ENCODE measurements at regions of chr1 and their contacts with region 1.

Region 1: DNA sequence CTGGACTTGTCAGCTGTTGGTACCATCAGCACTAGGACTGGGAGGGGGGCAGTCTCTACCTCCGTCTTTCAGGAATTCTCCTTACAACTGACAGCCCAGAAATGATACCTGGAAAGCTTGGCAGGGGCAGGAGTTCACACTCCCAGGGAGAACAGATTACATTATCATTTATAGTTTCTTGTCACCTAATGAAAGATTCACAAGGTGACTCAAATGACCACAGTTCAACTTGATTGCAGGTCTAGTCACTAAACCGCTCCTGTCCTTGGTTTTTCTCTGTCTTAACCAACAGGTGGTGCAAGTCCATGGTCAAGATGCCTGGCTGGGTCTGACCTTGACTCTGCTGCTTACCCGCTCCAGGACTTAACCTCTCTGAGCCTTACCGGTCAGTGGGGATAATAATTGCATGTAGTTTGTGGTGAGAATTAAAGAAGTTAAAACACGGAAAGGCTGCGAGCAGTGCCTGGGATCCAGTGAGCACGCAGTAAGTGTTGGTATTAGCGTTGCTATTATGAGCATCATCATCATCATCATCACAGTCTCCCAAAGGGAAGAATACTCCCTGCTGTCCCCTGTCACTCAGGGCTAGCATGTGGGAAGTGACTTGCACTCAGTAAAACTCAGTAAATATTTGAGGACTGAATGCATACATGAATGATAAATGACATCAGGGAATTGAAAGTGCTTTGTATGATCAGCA is 125.3 kb upstream of the CD34 start:
- DNase-seq: peak in 1 of 2 experiments; percentile 34
- H3K4me3 ChIP-seq: no peak overlapping the region
- H3K4me3 Mint-ChIP-seq: no peak overlapping the region
- H3K27ac Mint-ChIP-seq: no peak overlapping the region
- H3K4me1 ChIP-seq: no peaks in the 10 kb centered on the region
- H3K4me1 Mint-ChIP-seq: no peaks in the 10 kb centered on the region
- H3K27me3 ChIP-seq: no peaks in the 10 kb centered on the region
- H3K27me3 Mint-ChIP-seq: peaks cover 5% of the 10 kb centered on the region
- CTCF ChIP-seq: peak in 1 of 2 experiments; percentile 49

Region 2: DNA sequence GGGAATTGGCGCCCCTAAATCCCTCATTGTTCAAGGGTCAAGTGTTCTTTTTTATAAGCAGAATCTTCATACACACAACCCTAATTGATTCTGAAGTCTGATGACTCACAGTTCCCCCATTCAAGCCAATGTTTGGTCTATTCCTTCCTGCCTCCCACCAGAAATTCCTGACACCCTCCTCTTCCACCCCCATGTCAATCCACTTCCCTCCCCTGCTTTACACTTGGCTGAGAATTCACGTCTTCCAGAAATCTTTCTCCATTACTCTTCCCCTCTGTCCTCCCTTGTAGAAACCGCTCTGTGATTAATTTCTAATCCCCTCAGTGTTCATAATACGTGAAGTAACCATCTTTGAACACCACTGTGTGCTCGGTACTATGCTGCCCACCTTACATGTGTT is 49.1 kb before region 1 on chr1:
- CTCF ChIA-PET with region 1: no interaction called
- POLR2A ChIA-PET with region 1: no interaction called
- intact Hi-C with region 1: no loop called
- DNase-seq: no peak
- H3K4me3 ChIP-seq: no peak overlapping the region
- H3K4me3 Mint-ChIP-seq: no peak overlapping the region
- H3K27ac Mint-ChIP-seq: no peak overlapping the region
- H3K4me1 ChIP-seq: no peaks in the 10 kb centered on the region
- H3K4me1 Mint-ChIP-seq: no peaks in the 10 kb centered on the region
- H3K27me3 ChIP-seq: no peaks in the 10 kb centered on the region
- H3K27me3 Mint-ChIP-seq: peaks cover 27% of the 10 kb centered on the region
- CTCF ChIP-seq: no peak

Region 3: DNA sequence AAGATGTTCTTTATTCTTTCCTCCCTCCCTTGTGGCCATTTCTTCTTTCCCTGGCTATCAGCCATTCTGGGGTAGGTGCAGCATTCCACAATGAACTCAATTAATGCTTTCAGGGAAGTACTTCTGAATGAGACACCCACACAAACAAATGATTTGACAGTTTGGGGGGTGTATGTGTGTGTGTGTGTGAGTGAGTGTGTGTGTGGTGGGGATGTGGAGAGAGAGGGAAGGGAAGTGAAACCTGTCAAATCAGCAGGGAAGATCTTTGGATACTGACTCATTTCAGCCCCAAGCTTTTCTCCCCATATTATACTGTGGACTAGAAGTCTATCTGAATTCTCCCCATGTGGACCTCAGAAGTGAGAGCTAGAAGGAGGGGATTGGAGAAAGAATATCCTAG is 29.6 kb after region 1 on chr1:
- CTCF ChIA-PET with region 1: no interaction called
- POLR2A ChIA-PET with region 1: no interaction called
- intact Hi-C with region 1: no loop called
- DNase-seq: no peak
- H3K4me3 ChIP-seq: no peak overlapping the region
- H3K4me3 Mint-ChIP-seq: no peak overlapping the region
- H3K27ac Mint-ChIP-seq: no peak overlapping the region
- H3K4me1 ChIP-seq: no peaks in the 10 kb centered on the region
- H3K4me1 Mint-ChIP-seq: no peaks in the 10 kb centered on the region
- H3K27me3 ChIP-seq: no peaks in the 10 kb centered on the region; the same call in none of the 2 replicates
- H3K27me3 Mint-ChIP-seq: no peaks in the 10 kb centered on the region
- CTCF ChIP-seq: no peak

Region 4: GRCh38 chr1:208093754-208094719 is 57.8 kb after region 1 on chr1:
- CTCF ChIA-PET with region 1: interaction called, 3 read pairs
- POLR2A ChIA-PET with region 1: no interaction called
- intact Hi-C with region 1: loop called (anchors 1 kb)
- DNase-seq: peak; percentile 74 to 77
- H3K4me3 ChIP-seq: no peak overlapping the region
- H3K4me3 Mint-ChIP-seq: no peak overlapping the region
- H3K27ac Mint-ChIP-seq: no peak overlapping the region
- H3K4me1 ChIP-seq: no peaks in the 10 kb centered on the region
- H3K4me1 Mint-ChIP-seq: no peaks in the 10 kb centered on the region
- H3K27me3 ChIP-seq: no peaks in the 10 kb centered on the region
- H3K27me3 Mint-ChIP-seq: no peaks in the 10 kb centered on the region
- CTCF ChIP-seq: peak; percentile 81 to 92

Region 5: DNA sequence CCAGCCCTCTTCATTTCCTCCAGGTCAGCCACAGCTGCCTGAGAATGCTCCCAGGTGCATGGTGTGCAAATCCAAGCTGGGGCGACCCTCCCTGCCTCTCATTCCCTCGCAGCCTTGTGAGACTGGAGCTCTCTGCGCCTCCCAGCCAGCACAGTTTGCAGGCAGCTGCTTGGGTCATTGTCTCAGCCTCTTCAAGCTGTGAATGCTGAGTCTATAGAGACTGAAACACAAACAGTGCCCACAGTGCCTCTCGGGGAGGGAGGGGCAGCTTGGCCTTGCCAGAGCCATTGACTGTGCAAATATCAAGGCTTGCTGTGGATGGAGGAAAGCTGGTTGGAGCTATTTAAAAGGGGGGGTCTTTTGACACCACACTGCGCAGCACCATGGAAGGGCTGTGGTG is 197.3 kb after region 1 on chr1:
- CTCF ChIA-PET with region 1: no interaction called
- POLR2A ChIA-PET with region 1: no interaction called
- intact Hi-C with region 1: no loop called
- DNase-seq: no peak
- H3K4me3 ChIP-seq: no peak overlapping the region
- H3K4me3 Mint-ChIP-seq: no peak overlapping the region
- H3K27ac Mint-ChIP-seq: no peak overlapping the region
- H3K4me1 ChIP-seq: peaks cover 22% of the 10 kb centered on the region; the same call in 1 of the 2 replicates
- H3K4me1 Mint-ChIP-seq: peaks cover 18% of the 10 kb centered on the region
- H3K27me3 ChIP-seq: no peaks in the 10 kb centered on the region
- H3K27me3 Mint-ChIP-seq: no peaks in the 10 kb centered on the region
- CTCF ChIP-seq: no peak

Region 6: DNA sequence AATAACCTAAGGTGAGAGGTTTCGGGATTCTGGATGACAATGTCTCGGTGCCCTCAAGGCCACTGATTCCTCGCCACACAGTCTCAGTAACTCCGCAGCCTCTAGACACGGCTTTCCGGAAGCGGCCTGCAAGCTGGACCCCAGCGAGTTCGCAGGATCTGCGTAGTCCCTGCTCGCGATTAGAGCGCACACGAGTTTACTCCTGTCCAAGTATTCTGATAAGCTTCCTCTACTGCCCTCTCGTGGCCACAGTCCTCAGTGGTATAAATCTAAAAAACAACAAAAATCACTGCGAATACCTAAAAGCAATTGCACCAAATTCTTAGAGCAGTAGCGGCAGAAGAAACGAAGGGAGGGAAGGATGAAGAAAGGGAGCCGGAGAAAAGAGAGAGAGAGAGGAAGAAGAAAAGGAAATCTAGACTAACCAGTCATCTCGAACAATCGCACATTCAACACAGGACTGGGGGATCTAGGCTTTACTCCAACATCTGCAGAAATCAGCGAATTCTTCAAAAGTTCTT is 209.0 kb after region 1 on chr1:
- CTCF ChIA-PET with region 1: interaction called, 7 read pairs
- POLR2A ChIA-PET with region 1: no interaction called
- intact Hi-C with region 1: loop called (anchors 1 kb)
- DNase-seq: peak; percentile 83 to 86
- H3K4me3 ChIP-seq: peak overlapping the region; percentile 6; the same call in 1 of the 2 replicates
- H3K4me3 Mint-ChIP-seq: peak overlapping the region; percentile 88
- H3K27ac Mint-ChIP-seq: no peak overlapping the region
- H3K4me1 ChIP-seq: peaks cover 6% of the 10 kb centered on the region
- H3K4me1 Mint-ChIP-seq: peaks cover 7% of the 10 kb centered on the region
- H3K27me3 ChIP-seq: 0 out of 2 replicates have a peak, but pooled peaks cover 1% of the 10 kb centered on the region
- H3K27me3 Mint-ChIP-seq: peaks cover 16% of the 10 kb centered on the region
- CTCF ChIP-seq: peak; percentile 67 to 82

Measured in Caco-2 (cell line).